Activated CD4-positive, alpha-beta memory T cell treated with anti-CD3 and anti-CD28 coated beads for 36 hours (primary cell): ENCODE measurements at regions of chr4 and their contacts with region 1.

Region 1: DNA sequence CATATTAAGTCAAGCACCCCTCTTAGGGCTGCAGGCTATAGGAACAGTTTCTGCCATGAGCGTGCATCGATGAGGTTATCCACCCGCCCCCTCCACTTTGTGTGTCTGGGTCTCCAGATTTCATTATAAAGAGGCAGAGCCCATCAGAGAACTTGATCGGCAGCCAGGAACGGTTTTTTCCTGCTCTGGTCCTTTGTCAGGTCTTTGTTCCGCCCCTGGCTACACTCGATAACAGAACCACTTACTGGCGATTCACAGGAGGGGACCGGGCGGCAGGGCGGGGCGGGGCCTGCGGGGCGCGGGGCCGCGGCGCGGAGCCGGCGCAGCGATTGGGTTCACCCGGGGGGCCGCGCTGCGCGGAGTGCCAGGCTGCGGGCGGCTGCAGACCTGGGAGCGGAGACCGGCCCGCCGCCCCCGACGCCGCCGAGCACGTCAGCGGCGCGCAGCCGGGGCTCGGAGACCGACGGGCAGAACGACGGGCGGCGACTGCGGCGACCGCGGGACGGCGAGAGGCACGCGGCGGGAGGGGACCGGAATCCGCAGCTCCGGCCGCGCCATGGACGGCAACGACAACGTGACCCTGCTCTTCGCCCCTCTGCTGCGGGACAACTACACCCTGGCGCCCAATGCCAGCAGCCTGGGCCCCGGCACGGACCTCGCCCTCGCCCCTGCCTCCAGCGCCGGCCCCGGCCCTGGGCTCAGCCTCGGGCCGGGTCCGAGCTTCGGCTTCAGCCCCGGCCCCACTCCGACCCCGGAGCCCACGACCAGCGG is at the start of gene SLC10A4:
- DNase-seq: peak; percentile 9
- H3K4me3 Mint-ChIP-seq: peak within 1 kb of the TSS; percentile 39
- H3K27ac Mint-ChIP-seq: no peak within 1 kb of the TSS
- H3K4me1 Mint-ChIP-seq: peaks cover 11% of the 10 kb centered on the region
- H3K27me3 Mint-ChIP-seq: peaks cover 54% of the 10 kb centered on the region
- total RNA-seq, gene SLC10A4: not detected

Region 2: DNA sequence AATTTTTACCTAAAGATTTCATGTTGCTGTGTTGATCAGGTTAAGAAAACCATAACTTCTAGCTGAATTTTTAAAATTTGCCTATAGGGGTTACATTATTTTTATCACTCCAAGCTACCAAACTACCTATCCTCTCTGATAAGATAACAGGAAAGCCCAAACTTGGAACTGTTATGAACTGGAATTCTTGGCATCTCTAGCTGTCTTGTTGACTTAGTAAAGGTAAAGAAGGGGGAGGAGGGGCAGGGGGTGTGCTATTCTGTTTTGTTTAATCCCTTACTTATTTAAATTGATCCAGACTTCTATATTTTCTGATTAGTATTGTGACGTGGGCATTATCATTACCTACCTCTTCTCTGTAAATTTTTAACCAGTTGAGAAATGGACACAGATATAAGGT is 87.1 kb before region 1 on chr4:
- CTCF ChIA-PET with region 1: no interaction called
- POLR2A ChIA-PET with region 1: no interaction called
- intact Hi-C with region 1: no loop called
- DNase-seq: no peak
- H3K4me3 Mint-ChIP-seq: no peak overlapping the region
- H3K27ac Mint-ChIP-seq: no peak overlapping the region
- H3K4me1 Mint-ChIP-seq: peaks cover 24% of the 10 kb centered on the region
- H3K27me3 Mint-ChIP-seq: no peaks in the 10 kb centered on the region

Region 3: GRCh38 chr4:48439988-48440387 is 43.2 kb before region 1 on chr4:
- CTCF ChIA-PET with region 1: no interaction called
- POLR2A ChIA-PET with region 1: no interaction called
- intact Hi-C with region 1: loop called (anchors 10 kb)
- DNase-seq: no peak
- H3K4me3 Mint-ChIP-seq: no peak overlapping the region
- H3K27ac Mint-ChIP-seq: no peak overlapping the region
- H3K4me1 Mint-ChIP-seq: no peaks in the 10 kb centered on the region
- H3K27me3 Mint-ChIP-seq: peaks cover 2% of the 10 kb centered on the region